A549 (cell line): ENCODE measurements at regions of chr2 and their contacts with region 1.

Region 1: GRCh38 chr2:108583903-108584520 is 49.7 kb downstream of the LIMS1 start:
- DNase-seq: peak; percentile 72 to 81
- ATAC-seq: peak; percentile 83 to 88
- H3K4me3 ChIP-seq: no peak overlapping the region
- H3K27ac ChIP-seq: peak overlapping the region; percentile 59 to 64
- H3K4me1 ChIP-seq: peaks cover 74% of the 10 kb centered on the region
- CTCF ChIP-seq: peak; percentile 90
- EP300 ChIP-seq: no peak
- POLR2A ChIP-seq: no peak
- RAD21 ChIP-seq: peak; percentile 94 to 96

Region 2: DNA sequence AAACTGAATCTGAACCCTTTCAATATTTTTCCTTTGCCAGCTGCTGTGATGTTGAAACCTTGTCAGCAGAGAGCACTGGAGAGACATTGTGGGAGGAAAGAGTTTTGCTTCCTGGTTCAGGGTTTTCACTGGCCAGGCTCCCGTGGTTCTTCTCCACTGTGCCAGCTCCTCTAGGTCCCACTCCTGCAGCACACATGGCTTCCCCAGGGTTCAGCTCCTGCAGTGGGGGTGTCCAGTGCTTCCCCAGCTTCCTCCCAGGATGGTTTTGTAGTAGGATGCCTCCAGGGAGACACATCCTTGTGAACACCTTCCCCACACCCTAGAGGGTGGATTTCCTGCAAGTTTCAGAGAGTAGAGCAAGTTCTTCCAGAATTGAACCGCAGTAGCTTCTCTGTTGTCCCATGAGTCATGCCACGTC is 368.2 kb before region 1 on chr2:
- CTCF ChIA-PET with region 1: interaction called, 16 read pairs
- POLR2A ChIA-PET with region 1: interaction called, 3 read pairs
- DNase-seq: peak; percentile 46 to 71
- ATAC-seq: peak; percentile 95 to 99
- H3K4me3 ChIP-seq: no peak overlapping the region
- H3K27ac ChIP-seq: peak overlapping the region; percentile 79 to 86
- H3K4me1 ChIP-seq: peaks cover 11% of the 10 kb centered on the region
- CTCF ChIP-seq: peak; percentile 79
- EP300 ChIP-seq: no peak
- POLR2A ChIP-seq: no peak
- RAD21 ChIP-seq: peak; percentile 92 to 95

Region 3: DNA sequence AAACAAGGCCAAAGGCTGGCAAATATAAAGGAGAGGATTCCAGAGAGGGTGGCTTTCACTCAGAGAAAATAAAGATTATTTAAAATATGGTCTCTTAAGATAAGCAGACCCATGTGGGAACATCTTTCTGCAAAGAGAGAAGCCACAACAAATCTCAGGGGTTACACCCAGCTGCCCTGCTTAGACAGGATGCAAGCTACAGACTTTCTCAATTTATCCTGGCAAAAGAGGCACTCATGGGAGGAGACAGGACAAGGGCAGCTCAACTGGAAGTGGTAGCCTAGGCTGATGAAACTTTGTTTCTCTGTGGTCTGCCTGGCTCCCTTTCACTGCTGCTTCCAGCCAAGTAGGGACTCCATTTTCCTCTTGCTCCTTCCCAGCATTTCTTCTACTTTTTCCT is 232.1 kb before region 1 on chr2:
- CTCF ChIA-PET with region 1: interaction called, 30 read pairs
- POLR2A ChIA-PET with region 1: no interaction called
- DNase-seq: no peak
- ATAC-seq: no peak
- H3K4me3 ChIP-seq: no peak overlapping the region
- H3K27ac ChIP-seq: peak overlapping the region; percentile 26 to 56; a peak in 3 of 6 replicates
- H3K4me1 ChIP-seq: peaks cover 7% of the 10 kb centered on the region
- CTCF ChIP-seq: no peak
- EP300 ChIP-seq: no peak
- POLR2A ChIP-seq: no peak
- RAD21 ChIP-seq: no peak

Region 4: DNA sequence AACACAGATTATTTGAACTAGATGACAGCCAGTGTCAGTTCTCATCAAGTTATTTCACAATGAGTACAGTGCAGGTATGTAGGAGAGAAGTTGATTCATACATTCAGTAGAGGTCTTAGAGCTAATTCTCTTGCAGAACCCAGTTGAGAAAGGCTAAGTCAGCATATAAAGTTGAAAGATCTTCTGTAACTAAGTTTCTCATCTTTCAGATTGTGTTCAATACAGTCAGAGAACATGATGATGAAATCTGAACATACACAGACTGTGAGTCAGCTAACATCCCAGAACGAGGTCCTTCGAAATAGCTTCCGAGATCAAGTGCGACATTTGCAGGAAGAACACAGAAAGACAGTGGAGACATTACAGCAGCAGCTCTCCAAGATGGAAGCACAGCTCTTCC is 91.6 kb before region 1 on chr2:
- CTCF ChIA-PET with region 1: interaction called, 10 read pairs
- POLR2A ChIA-PET with region 1: interaction called, 8 read pairs
- DNase-seq: peak; percentile 66 to 88
- ATAC-seq: peak; percentile 99
- H3K4me3 ChIP-seq: no peak overlapping the region
- H3K27ac ChIP-seq: peak overlapping the region; percentile 73 to 77
- H3K4me1 ChIP-seq: peaks cover 27% of the 10 kb centered on the region
- CTCF ChIP-seq: no peak; the same call in 2 of the 3 replicates
- EP300 ChIP-seq: peak; percentile 25 to 35; a peak in 1 of 5 replicates
- POLR2A ChIP-seq: no peak
- RAD21 ChIP-seq: peak; percentile 33 to 48; a peak in 4 of 5 replicates

Region 5: GRCh38 chr2:108533832-108534583 is 50.0 kb before region 1 on chr2 and contains the start of gene LIMS1:
- CTCF ChIA-PET with region 1: interaction called, 25 read pairs
- POLR2A ChIA-PET with region 1: interaction called, 6 read pairs
- DNase-seq: peak; percentile 85 to 94
- ATAC-seq: peak; percentile 95 to 98
- H3K4me3 ChIP-seq: peak within 1 kb of the TSS; percentile 70
- H3K27ac ChIP-seq: peak within 1 kb of the TSS; percentile 97 to 99
- H3K4me1 ChIP-seq: peaks cover 47% of the 10 kb centered on the region
- CTCF ChIP-seq: no peak
- EP300 ChIP-seq: peak in 1 of 2 experiments; percentile 12; a peak in 1 of 5 replicates
- POLR2A ChIP-seq: peak; percentile 87
- RAD21 ChIP-seq: no peak
- polyA plus RNA-seq, gene LIMS1: 92.0 and 94.1 TPM in 2 replicates

Region 6: DNA sequence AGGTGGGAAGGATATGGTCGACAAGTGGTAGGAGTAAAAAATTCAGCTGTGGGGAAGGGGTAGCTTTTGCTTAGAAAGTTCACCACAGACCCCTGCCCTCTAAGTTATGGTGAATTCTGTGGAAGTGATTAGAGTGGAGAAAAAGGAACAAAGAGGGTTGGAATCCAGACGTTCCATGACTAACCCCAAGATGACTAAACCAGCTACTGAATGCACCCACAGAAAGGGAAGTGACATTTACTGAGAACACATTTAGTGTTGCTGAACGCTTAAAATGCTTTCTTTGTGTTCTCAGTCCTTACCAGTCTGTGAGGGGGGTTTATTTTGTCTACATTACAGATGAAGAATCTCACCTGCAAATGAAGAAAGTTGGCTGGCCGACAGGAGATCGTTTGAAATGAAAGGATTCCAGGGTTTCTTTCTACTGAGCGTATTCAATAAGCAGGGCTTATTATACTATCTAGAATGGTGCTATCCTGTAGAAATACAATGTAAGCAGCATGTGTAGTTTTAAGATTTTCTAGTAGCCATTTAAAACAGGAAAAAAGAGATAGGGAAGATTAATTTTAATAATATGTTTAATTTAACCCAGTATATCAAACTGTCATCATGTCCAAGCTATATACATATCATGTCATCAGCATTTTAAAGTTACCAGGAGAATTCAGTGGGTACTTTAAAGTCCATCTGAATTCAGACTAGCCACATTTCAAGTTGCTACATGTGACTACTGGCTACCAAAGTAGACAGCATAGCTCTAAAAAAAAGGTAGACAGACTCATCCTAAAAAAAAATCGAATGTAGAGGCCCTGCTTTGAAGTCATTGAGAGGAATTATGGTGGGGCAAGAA is 10.3 kb after region 1 on chr2:
- CTCF ChIA-PET with region 1: interaction called, 22 read pairs
- POLR2A ChIA-PET with region 1: no interaction called
- DNase-seq: peak in 1 of 2 experiments; percentile 76
- ATAC-seq: peak; percentile 80 to 81
- H3K4me3 ChIP-seq: 0 out of 3 replicates have a peak overlapping the region, but pooled peaks have one; percentile 5
- H3K27ac ChIP-seq: peak overlapping the region; percentile 85 to 86
- H3K4me1 ChIP-seq: peaks cover 58% of the 10 kb centered on the region
- CTCF ChIP-seq: no peak
- EP300 ChIP-seq: peak; percentile 29 to 39; a peak in 1 of 5 replicates
- POLR2A ChIP-seq: no peak
- RAD21 ChIP-seq: 0 out of 5 replicates have a peak, but pooled peaks of 1 of the 2 experiments have one; percentile 9